ENCODE measurements at regions of chr20 and their contacts with region 1.

Region 1: DNA sequence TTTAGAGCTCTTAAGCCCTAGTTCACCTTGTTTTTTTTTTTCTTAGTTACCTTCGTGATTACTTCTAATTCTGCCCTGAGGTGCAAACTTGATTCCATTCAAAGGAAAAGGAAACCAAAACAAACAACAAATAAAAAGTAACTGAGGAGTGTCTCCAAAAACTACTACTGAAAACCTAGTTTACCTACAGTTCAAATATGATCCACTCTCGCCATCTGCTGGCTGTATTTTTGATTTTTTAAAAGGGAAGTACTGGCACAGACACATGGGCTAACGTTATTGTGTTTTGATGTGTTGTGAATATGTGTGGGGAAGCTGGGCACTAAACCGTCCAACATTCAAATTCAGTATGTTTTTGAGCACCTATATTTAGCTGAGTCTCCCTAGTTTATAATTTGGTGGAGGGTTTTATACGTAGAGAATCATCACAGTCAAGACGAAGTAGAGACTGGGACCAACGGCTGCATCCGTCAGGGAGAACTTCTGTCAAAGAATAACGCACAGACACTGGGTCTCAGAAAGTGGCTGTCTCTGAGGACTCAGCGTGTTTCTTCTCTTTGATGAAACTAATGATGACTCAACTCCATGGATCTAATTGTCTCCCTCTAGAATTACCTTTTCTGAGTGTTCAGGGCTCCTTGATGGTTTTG is 373.5 kb upstream of the BTBD3 start:
- DNase-seq: peak; percentile 79
- H3K4me3 ChIP-seq: peak overlapping the region in 2 of 3 experiments; percentile 16 to 31
- H3K27ac ChIP-seq: peak overlapping the region; percentile 88
- H3K4me1 ChIP-seq: peaks cover 17% of the 10 kb centered on the region
- H3K27me3 ChIP-seq: no peaks in the 10 kb centered on the region
- CTCF ChIP-seq: peak; percentile 38 to 60

Region 2: DNA sequence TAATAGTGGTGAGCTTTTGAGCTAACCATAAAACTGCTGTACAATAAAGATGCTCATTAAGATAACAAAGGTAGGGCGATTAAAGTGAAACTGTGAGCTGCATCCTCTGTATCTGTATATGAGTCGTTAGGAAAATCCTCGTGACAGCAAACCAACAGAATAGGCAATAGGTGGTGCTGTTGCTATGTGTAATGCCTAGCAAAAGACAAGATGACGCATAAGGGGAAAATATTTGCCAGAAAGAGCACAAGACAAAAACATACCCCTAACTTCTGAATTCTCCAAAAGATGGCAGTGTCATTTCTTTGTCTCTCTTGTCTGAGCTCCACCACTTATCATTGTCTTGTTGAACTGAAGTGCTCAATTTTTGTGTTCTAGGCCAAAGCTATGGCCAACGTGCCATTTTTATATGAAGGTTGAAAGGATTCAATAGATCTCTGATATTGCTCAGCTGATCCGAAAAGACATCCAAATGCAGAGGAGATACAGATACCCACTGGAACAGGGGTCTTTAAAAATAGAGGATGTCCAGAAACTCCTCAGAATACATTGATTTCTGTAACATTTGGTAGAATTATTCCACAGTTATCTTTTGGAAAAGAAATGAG is 1565.7 kb before region 1 on chr20:
- CTCF ChIA-PET with region 1: no interaction called
- dilution Hi-C with region 1: no loop called
- in situ Hi-C with region 1: no loop called
- intact Hi-C with region 1: loop called (anchors 1 kb)
- DNase-seq: peak; percentile 86
- H3K4me3 ChIP-seq: peak overlapping the region in 2 of 3 experiments; percentile 25 to 38
- H3K27ac ChIP-seq: peak overlapping the region; percentile 42
- H3K4me1 ChIP-seq: peaks cover 7% of the 10 kb centered on the region
- H3K27me3 ChIP-seq: no peaks in the 10 kb centered on the region
- CTCF ChIP-seq: peak; percentile 80 to 81

Region 3: GRCh38 chr20:10553326-10553984 is 990.7 kb before region 1 on chr20:
- CTCF ChIA-PET with region 1: no interaction called
- dilution Hi-C with region 1: no loop called
- in situ Hi-C with region 1: loop called (anchors 10 to 25 kb)
- intact Hi-C with region 1: loop called (anchors 1 kb)
- DNase-seq: peak; percentile 69
- H3K4me3 ChIP-seq: no peak overlapping the region
- H3K27ac ChIP-seq: no peak overlapping the region
- H3K4me1 ChIP-seq: peaks cover 55% of the 10 kb centered on the region
- H3K27me3 ChIP-seq: no peaks in the 10 kb centered on the region
- CTCF ChIP-seq: peak; percentile 81 to 95

Region 4: GRCh38 chr20:11098888-11099287 is 445.3 kb before region 1 on chr20:
- CTCF ChIA-PET with region 1: no interaction called
- dilution Hi-C with region 1: no loop called
- in situ Hi-C with region 1: no loop called
- intact Hi-C with region 1: loop called (anchors 5 kb)
- DNase-seq: peak; percentile 28
- H3K4me3 ChIP-seq: no peak overlapping the region
- H3K27ac ChIP-seq: no peak overlapping the region
- H3K4me1 ChIP-seq: peaks cover 4% of the 10 kb centered on the region
- H3K27me3 ChIP-seq: no peaks in the 10 kb centered on the region
- CTCF ChIP-seq: peak in 1 of 2 donors; percentile 55

Region 5: GRCh38 chr20:11274141-11274594 is 270.0 kb before region 1 on chr20:
- CTCF ChIA-PET with region 1: no interaction called
- dilution Hi-C with region 1: no loop called
- in situ Hi-C with region 1: loop called in 1 of 2 experiments (anchors 5 kb)
- intact Hi-C with region 1: loop called (anchors 1 kb)
- DNase-seq: peak; percentile 81
- H3K4me3 ChIP-seq: no peak overlapping the region
- H3K27ac ChIP-seq: no peak overlapping the region
- H3K4me1 ChIP-seq: no peaks in the 10 kb centered on the region
- H3K27me3 ChIP-seq: no peaks in the 10 kb centered on the region
- CTCF ChIP-seq: peak; percentile 48 to 61

Region 6: DNA sequence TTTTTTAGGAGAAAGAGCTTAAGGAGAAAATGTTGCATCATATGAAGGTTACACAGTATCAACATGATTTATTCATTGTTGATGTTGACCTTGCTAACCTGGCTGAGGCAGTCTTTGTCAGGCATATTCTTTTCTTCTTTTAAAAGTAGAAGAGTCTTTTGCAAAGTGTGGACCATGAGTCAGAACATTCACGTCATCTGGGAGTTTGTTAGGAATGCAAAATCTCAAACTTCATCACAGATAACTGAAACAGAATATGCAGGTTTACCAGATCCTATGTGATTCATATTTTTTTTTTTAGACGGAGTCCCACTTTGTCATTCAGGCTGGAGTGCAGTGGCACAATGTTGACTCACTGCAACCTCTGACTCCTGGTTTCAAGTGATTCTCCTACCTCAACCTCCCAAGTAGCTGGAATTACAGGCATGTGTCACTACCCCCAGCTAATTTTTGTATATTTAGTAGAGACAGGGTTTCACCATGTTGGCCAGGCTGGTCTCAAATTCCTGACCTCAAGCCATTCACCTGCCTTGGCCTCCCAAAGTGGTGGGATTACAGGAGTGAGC is 156.9 kb before region 1 on chr20:
- CTCF ChIA-PET with region 1: no interaction called
- dilution Hi-C with region 1: no loop called
- in situ Hi-C with region 1: loop called in 1 of 2 experiments (anchors 25 kb)
- intact Hi-C with region 1: loop called (anchors 2 kb)
- DNase-seq: peak; percentile 97
- H3K4me3 ChIP-seq: no peak overlapping the region
- H3K27ac ChIP-seq: peak overlapping the region; percentile 81
- H3K4me1 ChIP-seq: peaks cover 25% of the 10 kb centered on the region
- H3K27me3 ChIP-seq: no peaks in the 10 kb centered on the region
- CTCF ChIP-seq: no peak

Region 7: GRCh38 chr20:11454966-11455799 is 89.0 kb before region 1 on chr20:
- CTCF ChIA-PET with region 1: interaction called, 4 read pairs
- dilution Hi-C with region 1: no loop called
- in situ Hi-C with region 1: no loop called
- intact Hi-C with region 1: loop called (anchors 1 kb)
- DNase-seq: peak; percentile 86
- H3K4me3 ChIP-seq: peak overlapping the region; percentile 33 to 48 (median 37)
- H3K27ac ChIP-seq: peak overlapping the region; percentile 93
- H3K4me1 ChIP-seq: peaks cover 71% of the 10 kb centered on the region
- H3K27me3 ChIP-seq: no peaks in the 10 kb centered on the region
- CTCF ChIP-seq: no peak

Measured in mammary epithelial cell (primary cell).